IMR-90 (cell line): ENCODE measurements at regions of chr2 and their contacts with region 1.

Region 1: DNA sequence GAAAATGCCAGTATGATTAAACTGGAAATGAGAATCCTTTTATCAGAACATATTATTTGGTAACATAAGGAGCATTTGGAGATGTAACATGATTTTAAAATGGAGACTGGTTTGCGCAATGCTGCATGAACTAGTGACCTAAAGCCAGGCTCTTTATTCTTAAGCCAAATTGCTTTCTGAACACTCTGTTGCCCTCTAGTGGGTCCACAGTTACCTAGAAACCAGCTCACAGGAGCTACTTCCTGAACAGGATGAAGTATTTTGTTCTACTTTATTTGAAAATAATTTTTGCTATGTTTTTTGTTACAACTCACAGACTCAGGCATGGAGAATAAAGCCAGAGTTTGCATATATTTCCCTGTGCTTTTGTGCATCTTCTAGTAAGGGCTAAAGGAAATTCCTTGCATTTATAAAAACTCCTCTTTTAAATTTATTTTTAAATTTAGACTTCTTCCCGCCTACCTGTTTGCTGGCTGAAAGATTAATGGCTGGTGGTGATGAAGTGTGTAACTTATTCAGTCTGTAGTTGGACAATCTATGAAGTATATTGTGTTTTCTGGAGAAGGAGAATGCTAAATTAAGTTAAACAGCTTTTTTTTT is 146.7 kb downstream of the PARD3B start:
- DNase-seq: peak; percentile 91
- ATAC-seq: peak; percentile 74
- H3K4me3 ChIP-seq: no peak overlapping the region
- H3K27ac ChIP-seq: no peak overlapping the region
- H3K4me1 ChIP-seq: peaks cover 3% of the 10 kb centered on the region; the same call in 1 of the 2 replicates
- H3K27me3 ChIP-seq: no peaks in the 10 kb centered on the region
- CTCF ChIP-seq: peak; percentile 84
- POLR2A ChIP-seq: no peak
- RAD21 ChIP-seq: peak; percentile 92

Region 2: DNA sequence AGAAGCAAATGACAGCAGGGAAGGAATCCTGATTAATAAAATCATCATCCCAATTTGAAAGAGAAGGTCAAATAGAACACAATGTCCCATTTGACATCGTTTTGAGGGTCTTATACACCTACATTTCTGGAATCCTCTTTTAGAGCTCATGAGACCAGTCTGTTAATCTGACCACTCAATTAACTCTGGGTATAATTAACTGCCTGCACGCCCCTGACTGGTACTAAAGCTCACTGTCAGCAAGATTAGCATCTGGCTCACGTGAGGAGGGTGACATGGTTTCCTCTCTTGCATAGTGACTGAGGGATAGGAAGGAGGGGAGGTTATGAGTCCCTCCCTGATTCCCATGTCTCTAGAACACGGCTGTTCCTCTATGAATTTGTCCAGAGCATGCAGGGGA is 631.2 kb before region 1 on chr2:
- CTCF ChIA-PET with region 1: no interaction called
- POLR2A ChIA-PET with region 1: no interaction called
- dilution Hi-C with region 1: no loop called
- in situ Hi-C with region 1: no loop called
- intact Hi-C with region 1: no loop called
- DNase-seq: no peak
- ATAC-seq: no peak
- H3K4me3 ChIP-seq: no peak overlapping the region
- H3K27ac ChIP-seq: no peak overlapping the region
- H3K4me1 ChIP-seq: no peaks in the 10 kb centered on the region
- H3K27me3 ChIP-seq: peaks cover 4% of the 10 kb centered on the region; the same call in 1 of the 2 replicates
- CTCF ChIP-seq: no peak
- POLR2A ChIP-seq: no peak
- RAD21 ChIP-seq: no peak

Region 3: DNA sequence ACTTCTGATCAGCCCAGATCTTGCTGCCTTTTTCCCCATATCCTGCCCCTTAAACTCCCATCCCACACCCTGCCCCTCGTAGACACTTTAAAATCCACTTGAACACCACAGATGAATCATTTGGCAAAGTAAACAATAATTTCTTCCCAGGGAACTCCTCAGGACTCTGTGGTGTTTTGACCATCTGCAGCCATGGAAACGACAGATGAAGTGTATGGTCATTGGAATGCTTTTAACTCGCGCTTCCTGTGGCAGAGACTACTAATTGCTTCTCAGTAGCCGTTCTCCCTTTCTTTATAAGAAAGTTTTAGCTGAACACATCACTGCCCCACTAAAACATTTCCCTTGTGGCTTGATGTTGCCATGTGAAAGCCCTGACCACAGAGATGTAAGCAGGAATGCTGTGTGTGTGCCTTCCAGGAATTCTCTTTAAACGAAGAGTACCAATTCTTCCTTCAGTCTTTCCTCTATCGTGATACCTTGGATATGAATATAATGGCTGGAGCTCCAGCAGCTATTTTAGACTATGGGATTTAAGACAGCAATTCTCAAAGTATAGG is 239.5 kb before region 1 on chr2:
- CTCF ChIA-PET with region 1: no interaction called
- POLR2A ChIA-PET with region 1: no interaction called
- dilution Hi-C with region 1: no loop called
- in situ Hi-C with region 1: no loop called
- intact Hi-C with region 1: loop called (anchors 5 kb)
- DNase-seq: peak; percentile 98
- ATAC-seq: peak; percentile 98
- H3K4me3 ChIP-seq: peak overlapping the region; percentile 22; the same call in 1 of the 2 replicates
- H3K27ac ChIP-seq: peak overlapping the region; percentile 31; the same call in 1 of the 2 replicates
- H3K4me1 ChIP-seq: peaks cover 7% of the 10 kb centered on the region
- H3K27me3 ChIP-seq: no peaks in the 10 kb centered on the region
- CTCF ChIP-seq: no peak
- POLR2A ChIP-seq: peak; percentile 72
- RAD21 ChIP-seq: no peak; the same call in none of the 2 replicates

Region 4: DNA sequence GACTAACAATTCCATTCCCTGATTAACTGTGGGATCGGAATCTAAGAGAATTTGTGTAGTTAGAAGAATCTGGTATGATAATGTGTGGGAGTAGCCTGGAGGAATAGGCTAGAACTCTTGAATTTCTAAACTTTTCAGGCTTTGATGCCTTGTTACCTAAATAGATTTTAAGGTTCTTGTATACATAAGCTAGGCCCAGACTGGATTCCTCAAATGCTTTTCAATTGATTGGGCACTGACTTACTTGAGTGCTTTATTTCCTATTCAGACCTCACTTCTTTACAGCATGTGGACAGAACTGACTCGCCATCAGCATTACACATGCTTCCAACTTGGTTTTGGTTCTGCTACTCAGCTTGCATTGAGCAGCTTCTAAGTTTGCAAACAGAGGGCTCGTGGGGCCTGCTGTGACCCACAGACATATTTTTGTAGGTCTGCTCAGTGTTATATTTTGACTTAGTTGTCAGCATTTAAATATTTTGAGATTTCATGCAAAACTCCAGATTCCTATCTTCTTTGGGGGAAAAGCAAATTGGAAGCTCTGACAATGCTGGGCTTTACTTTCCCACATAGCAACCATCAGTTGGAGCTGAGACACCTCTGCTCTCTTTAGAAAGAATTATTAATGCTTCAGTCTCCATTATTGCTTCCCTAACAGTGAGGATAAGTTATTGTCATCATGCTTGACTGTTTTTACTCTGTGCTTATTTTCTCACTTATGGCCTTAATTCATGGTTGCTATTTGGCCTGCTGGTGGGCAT is 141.1 kb before region 1 on chr2:
- CTCF ChIA-PET with region 1: interaction called, 3 read pairs
- POLR2A ChIA-PET with region 1: no interaction called
- dilution Hi-C with region 1: no loop called
- in situ Hi-C with region 1: no loop called
- intact Hi-C with region 1: loop called (anchors 2 kb)
- DNase-seq: peak; percentile 96
- ATAC-seq: peak; percentile 84
- H3K4me3 ChIP-seq: no peak overlapping the region; the same call in 1 of the 2 replicates
- H3K27ac ChIP-seq: peak overlapping the region; percentile 99
- H3K4me1 ChIP-seq: peaks cover 20% of the 10 kb centered on the region
- H3K27me3 ChIP-seq: no peaks in the 10 kb centered on the region
- CTCF ChIP-seq: no peak
- POLR2A ChIP-seq: no peak
- RAD21 ChIP-seq: no peak

Region 5: GRCh38 chr2:204860274-204860673 is 168.3 kb after region 1 on chr2:
- CTCF ChIA-PET with region 1: no interaction called
- POLR2A ChIA-PET with region 1: no interaction called
- dilution Hi-C with region 1: no loop called
- in situ Hi-C with region 1: no loop called
- intact Hi-C with region 1: loop called (anchors 5 kb)
- DNase-seq: no peak
- ATAC-seq: no peak
- H3K4me3 ChIP-seq: no peak overlapping the region
- H3K27ac ChIP-seq: no peak overlapping the region
- H3K4me1 ChIP-seq: peaks cover 7% of the 10 kb centered on the region
- H3K27me3 ChIP-seq: no peaks in the 10 kb centered on the region
- CTCF ChIP-seq: no peak
- POLR2A ChIP-seq: no peak
- RAD21 ChIP-seq: no peak